Activated B cell treated with CpG ODN at 0.5 μM for 24 hours (primary cell): ENCODE measurements at regions of chr1 and their contacts with region 1.

Region 1: GRCh38 chr1:173779936-173780335 is 44.5 kb upstream of the DARS2 start:
- DNase-seq: no peak
- ATAC-seq: no peak
- H3K4me3 Mint-ChIP-seq: no peak overlapping the region
- H3K27ac Mint-ChIP-seq: no peak overlapping the region
- H3K4me1 Mint-ChIP-seq: no peaks in the 10 kb centered on the region
- H3K27me3 Mint-ChIP-seq: no peaks in the 10 kb centered on the region
- CTCF ChIP-seq: no peak

Region 2: DNA sequence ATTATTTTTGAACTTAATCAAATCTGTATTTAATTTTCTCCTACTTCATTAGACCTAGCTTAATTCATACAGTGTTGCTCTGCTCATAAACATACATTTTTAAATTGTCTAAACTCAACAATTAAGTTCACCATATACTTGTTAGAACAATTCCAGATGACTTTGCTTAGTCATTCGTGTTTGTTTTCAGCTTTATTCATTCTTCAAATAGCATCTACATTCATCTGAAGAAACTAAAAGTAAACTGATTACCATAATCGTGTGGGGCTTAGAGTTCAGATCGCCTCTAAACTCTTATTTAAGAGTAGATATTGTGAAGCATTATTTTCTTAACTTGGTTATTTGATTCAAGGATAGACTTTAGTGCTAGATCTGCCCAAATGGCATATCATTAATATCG is 30.8 kb before region 1 on chr1:
- CTCF ChIA-PET with region 1: no interaction called
- POLR2A ChIA-PET with region 1: interaction called, 11 read pairs
- intact Hi-C with region 1: no loop called
- DNase-seq: no peak
- ATAC-seq: no peak
- H3K4me3 Mint-ChIP-seq: no peak overlapping the region
- H3K27ac Mint-ChIP-seq: no peak overlapping the region
- H3K4me1 Mint-ChIP-seq: peaks cover 7% of the 10 kb centered on the region
- H3K27me3 Mint-ChIP-seq: no peaks in the 10 kb centered on the region
- CTCF ChIP-seq: no peak